ENCODE measurements at regions of chr7 and their contacts with region 1.

Region 1: GRCh38 chr7:87920578-87920977 is 13.5 kb upstream of the ADAM22 start:
- DNase-seq: no peak
- H3K4me3 ChIP-seq: no peak overlapping the region
- H3K27ac ChIP-seq: no peak overlapping the region
- H3K4me1 ChIP-seq: no peaks in the 10 kb centered on the region
- H3K27me3 ChIP-seq: no peaks in the 10 kb centered on the region
- CTCF ChIP-seq: no peak

Region 2: DNA sequence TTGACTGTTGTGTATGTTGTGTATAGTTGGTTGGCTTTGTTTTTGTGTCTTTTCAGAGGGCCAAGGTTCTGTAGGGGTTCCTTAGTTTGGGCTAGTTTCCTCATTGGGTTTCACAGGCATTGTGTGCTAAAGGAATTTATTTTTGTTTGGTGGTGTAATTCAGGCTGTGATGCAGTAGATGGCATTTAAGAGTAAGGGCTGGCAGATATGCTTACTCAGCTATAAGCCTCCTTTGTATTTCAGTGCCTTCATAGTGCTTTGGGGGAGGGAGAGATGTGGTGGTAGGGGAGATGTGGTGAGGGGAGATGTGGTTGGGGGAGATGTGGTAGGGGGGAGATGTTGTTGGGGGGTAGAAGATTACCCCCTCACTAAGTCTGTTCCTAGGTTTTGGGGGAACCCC is 136.2 kb before region 1 on chr7:
- CTCF ChIA-PET with region 1: no interaction called
- dilution Hi-C with region 1: no loop called
- in situ Hi-C with region 1: no loop called
- intact Hi-C with region 1: no loop called
- DNase-seq: no peak
- H3K4me3 ChIP-seq: no peak overlapping the region
- H3K27ac ChIP-seq: no peak overlapping the region
- H3K4me1 ChIP-seq: no peaks in the 10 kb centered on the region
- H3K27me3 ChIP-seq: no peaks in the 10 kb centered on the region
- CTCF ChIP-seq: peak; percentile 14 to 32

Region 3: DNA sequence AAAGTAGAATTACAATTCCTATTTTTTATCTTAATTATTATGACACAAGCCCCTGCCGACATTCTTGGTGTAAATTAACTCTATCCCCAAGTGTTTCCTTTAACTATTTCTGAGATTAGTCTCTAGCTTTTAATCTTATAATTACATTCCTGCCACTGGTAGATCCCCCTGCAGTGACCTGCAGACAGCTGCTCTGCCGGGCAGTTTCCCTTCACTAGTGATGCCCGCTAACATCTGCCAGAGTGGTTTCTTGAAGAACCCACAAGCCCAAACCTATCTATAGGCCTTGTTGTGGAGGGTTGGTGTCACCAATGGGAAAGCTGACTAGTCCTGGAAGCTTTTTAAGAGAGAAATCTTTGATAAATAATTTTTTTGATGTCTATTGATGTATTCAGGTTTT is 63.5 kb after region 1 on chr7:
- CTCF ChIA-PET with region 1: no interaction called
- dilution Hi-C with region 1: loop called (anchors 5 kb)
- in situ Hi-C with region 1: no loop called
- intact Hi-C with region 1: no loop called
- DNase-seq: no peak
- H3K4me3 ChIP-seq: no peak overlapping the region
- H3K27ac ChIP-seq: no peak overlapping the region
- H3K4me1 ChIP-seq: no peaks in the 10 kb centered on the region
- H3K27me3 ChIP-seq: no peaks in the 10 kb centered on the region
- CTCF ChIP-seq: no peak

Measured in mammary epithelial cell (primary cell).